ENCODE measurements at regions of chr10 and their contacts with region 1.

Region 1: GRCh38 chr10:21525367-21526183 is at the start of gene SKIDA1:
- DNase-seq: peak; percentile 85
- H3K4me3 ChIP-seq: peak within 1 kb of the TSS; percentile 71
- H3K27ac ChIP-seq: peak within 1 kb of the TSS; percentile 79
- H3K4me1 ChIP-seq: peaks cover 32% of the 10 kb centered on the region
- H3K27me3 ChIP-seq: no peaks in the 10 kb centered on the region
- CTCF ChIP-seq: no peak
- total RNA-seq, gene SKIDA1: 0.65 and 1.1 TPM in 2 replicates

Region 2: GRCh38 chr10:21135023-21135931 is 390.3 kb before region 1 on chr10:
- CTCF ChIA-PET with region 1: no interaction called
- POLR2A ChIA-PET with region 1: no interaction called
- intact Hi-C with region 1: no loop called
- DNase-seq: peak in 1 of 2 experiments; percentile 37
- H3K4me3 ChIP-seq: no peak overlapping the region
- H3K27ac ChIP-seq: no peak overlapping the region
- H3K4me1 ChIP-seq: peaks cover 11% of the 10 kb centered on the region; the same call in 1 of the 2 replicates
- H3K27me3 ChIP-seq: no peaks in the 10 kb centered on the region
- CTCF ChIP-seq: no peak

Region 3: DNA sequence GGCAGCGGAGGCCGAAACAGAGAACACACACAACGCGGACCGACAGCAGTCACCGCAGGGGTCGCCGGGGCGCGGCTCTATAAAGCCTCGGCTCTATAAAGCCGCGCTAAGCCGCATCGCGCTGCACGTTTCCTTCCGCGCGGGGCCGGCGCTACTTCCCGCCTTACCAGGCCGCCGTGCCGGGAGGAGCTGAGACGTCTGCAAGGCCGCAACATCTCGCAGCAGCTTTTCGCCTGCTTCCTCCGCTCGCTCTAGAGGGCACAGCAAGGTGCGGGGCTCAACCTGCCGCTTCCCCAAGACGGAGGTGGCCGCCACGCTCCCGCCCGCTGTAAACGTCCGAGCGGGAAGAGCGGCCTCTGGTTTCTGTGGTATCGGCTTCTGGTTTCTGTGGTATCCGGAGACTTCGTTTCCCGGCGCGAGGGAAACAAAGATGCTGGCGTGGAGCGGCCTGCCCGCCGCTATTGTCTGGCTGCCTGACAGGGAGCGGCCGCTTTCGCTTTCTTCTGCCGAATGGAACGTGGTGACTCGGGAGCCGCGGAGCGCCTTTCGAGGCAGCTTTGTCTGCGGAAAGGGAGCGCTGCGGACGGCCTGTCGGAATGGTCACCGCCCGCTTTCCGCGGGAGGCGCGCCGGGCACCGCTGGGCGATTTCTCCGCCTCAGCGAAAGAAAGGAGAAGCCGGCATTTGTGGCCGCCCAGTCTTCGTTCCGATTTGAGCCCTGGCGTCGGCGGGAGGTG is 911.5 kb after region 1 on chr10:
- CTCF ChIA-PET with region 1: no interaction called
- POLR2A ChIA-PET with region 1: no interaction called
- intact Hi-C with region 1: loop called (anchors 10 kb)
- DNase-seq: peak; percentile 61 to 62
- H3K4me3 ChIP-seq: peak overlapping the region; percentile 82
- H3K27ac ChIP-seq: peak overlapping the region; percentile 48
- H3K4me1 ChIP-seq: peaks cover 37% of the 10 kb centered on the region
- H3K27me3 ChIP-seq: no peaks in the 10 kb centered on the region
- CTCF ChIP-seq: no peak

Measured in PC-9 (cell line).